ENCODE measurements at regions of chr14 and their contacts with region 1.

Region 1: GRCh38 chr14:20682435-20683124 is 1.8 kb upstream of the RNASE4 start:
- DNase-seq: peak; percentile 89 to 95 (median 93)
- ATAC-seq: peak; percentile 91 to 94 (median 92)
- H3K4me3 ChIP-seq: peak overlapping the region; percentile 47 to 95 (median 75)
- H3K27ac ChIP-seq: peak overlapping the region; percentile 96 to 100 (median 100)
- H3K4me1 ChIP-seq: peaks cover 0 to 37% (median 19%) of the 10 kb centered on the region in 12 donors
- H3K27me3 ChIP-seq: no peaks in the 10 kb centered on the region
- CTCF ChIP-seq: peak in 3 of 12 donors; percentile 0 to 39 (median 30)
- POLR2A ChIP-seq: peak; percentile 8 to 91

Region 2: DNA sequence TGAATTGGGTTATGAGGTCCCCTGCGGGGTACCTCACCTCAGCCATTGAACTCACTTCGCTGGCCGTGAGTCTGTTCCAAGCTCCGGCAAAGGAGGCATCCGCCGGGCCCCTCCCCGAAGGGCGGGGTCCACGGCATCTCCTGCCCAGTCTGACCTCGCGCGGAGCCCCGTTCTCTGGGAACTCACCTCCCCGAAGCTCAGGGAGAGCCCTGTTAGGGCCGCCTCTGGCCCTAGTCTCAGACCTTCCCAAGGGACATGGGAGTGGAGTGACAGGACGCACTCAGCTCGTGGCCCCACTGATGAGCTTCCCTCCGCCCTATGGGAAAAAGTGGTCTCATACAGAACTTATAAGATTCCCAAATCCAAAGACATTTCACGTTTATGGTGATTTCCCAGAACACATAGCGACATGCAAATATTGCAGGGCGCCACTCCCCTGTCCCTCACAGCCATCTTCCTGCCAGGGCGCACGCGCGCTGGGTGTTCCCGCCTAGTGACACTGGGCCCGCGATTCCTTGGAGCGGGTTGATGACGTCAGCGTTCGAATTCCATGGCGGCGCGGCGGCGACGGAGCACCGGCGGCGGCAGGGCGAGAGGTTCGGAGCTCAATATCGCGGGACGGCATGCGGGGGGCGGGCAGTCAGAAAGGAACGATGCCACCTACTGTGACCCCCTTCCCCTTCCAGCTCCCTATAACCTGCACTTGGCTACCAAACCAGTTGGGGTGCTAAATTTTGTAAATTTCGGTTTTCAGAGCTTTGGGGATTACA is 339.3 kb before region 1 on chr14 and contains the start of gene PARP2:
- intact Hi-C with region 1: loop called in 3 of 10 experiments (anchors 1 to 5 kb)
- DNase-seq: peak; percentile 97 to 99 (median 98)
- ATAC-seq: peak; percentile 98 to 99 (median 98)
- H3K4me3 ChIP-seq: peak within 1 kb of the TSS; percentile 52 to 88 (median 70)
- H3K27ac ChIP-seq: peak within 1 kb of the TSS; percentile 73 to 98 (median 85)
- H3K4me1 ChIP-seq: peaks cover 0 to 13% (median 6%) of the 10 kb centered on the region in 12 donors
- H3K27me3 ChIP-seq: no peaks in the 10 kb centered on the region
- CTCF ChIP-seq: peak in 1 of 12 donors; percentile 11
- POLR2A ChIP-seq: peak in 1 of 2 donors; percentile 85
- total RNA-seq, gene PARP2: 6.8 to 20.0 (median 16.2) TPM

Region 3: GRCh38 chr14:20461274-20462001 is 221.1 kb before region 1 on chr14 and contains the start of gene PIP4P1:
- intact Hi-C with region 1: loop called in 6 of 10 experiments (anchors 2 to 10 kb)
- DNase-seq: peak; percentile 98 to 100 (median 99)
- ATAC-seq: peak; percentile 97 to 99 (median 98)
- H3K4me3 ChIP-seq: peak within 1 kb of the TSS; percentile 66 to 99 (median 92)
- H3K27ac ChIP-seq: peak within 1 kb of the TSS; percentile 57 to 97 (median 92)
- H3K4me1 ChIP-seq: peaks cover 0 to 52% (median 17%) of the 10 kb centered on the region in 12 donors
- H3K27me3 ChIP-seq: no peaks in the 10 kb centered on the region
- CTCF ChIP-seq: no peak
- POLR2A ChIP-seq: peak in 1 of 2 donors; percentile 88
- total RNA-seq, gene PIP4P1: 12.3 to 25.3 (median 18.0) TPM

Region 4: GRCh38 chr14:20624495-20625070 is 58.0 kb before region 1 on chr14:
- intact Hi-C with region 1: loop called in 4 of 10 experiments (anchors 5 kb)
- DNase-seq: peak; percentile 25 to 77 (median 52)
- ATAC-seq: peak; percentile 27 to 62 (median 53)
- H3K4me3 ChIP-seq: peak overlapping the region in 10 of 12 donors; percentile 9 to 47 (median 26)
- H3K27ac ChIP-seq: peak overlapping the region in 2 of 12 donors; percentile 1 to 12
- H3K4me1 ChIP-seq: peaks cover 0 to 41% (median 10%) of the 10 kb centered on the region in 12 donors
- H3K27me3 ChIP-seq: peaks cover 0 to 44% (median 0%) of the 10 kb centered on the region in 9 donors
- CTCF ChIP-seq: no peak
- POLR2A ChIP-seq: no peak

Region 5: DNA sequence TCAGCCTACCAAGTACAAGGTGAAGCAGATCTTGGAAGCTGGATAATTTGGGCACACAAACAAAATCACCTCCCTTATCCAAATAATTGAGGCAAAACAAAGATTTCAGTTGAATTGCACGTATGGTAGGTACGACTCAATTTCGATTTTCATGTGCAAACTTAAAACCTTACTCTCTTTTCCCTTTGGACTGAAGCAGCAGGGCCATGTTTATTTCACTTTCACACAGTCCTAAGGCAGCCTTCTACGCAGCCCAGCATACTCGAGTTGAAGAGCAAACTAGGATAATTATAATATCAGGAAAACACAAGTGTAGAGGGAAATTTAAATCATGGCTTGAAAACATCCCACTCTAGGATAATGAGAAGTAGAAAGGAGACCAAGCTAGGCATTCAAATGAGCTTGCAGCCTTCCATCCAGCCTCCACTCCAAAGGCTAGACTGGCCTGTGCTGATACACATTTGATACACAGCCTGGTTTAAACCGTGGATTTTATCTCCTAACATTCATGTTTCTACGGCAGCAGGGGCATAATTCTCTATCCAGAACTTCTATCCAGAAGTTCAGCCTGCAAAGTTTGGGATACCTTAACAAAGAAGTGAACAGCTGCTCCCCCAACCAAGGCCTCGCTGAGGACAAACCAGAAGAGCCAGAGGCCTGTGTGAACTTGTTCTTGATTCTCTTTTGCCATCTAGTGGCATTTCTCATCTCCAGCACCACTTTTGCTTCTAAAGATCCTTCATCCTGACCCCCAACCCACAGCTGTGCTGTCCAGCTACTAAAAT is 357.2 kb after region 1 on chr14:
- intact Hi-C with region 1: loop called in 1 of 10 experiments (anchors 5 kb)
- DNase-seq: peak in 4 of 5 donors; percentile 45 to 61 (median 55)
- ATAC-seq: peak; percentile 53 to 75 (median 66)
- H3K4me3 ChIP-seq: peak overlapping the region in 5 of 12 donors; percentile 6 to 43 (median 9)
- H3K27ac ChIP-seq: peak overlapping the region; percentile 19 to 91 (median 74)
- H3K4me1 ChIP-seq: peaks cover 5 to 59% (median 36%) of the 10 kb centered on the region in 12 donors
- H3K27me3 ChIP-seq: no peaks in the 10 kb centered on the region
- CTCF ChIP-seq: peak; percentile 55 to 82 (median 71)
- POLR2A ChIP-seq: no peak

Region 6: DNA sequence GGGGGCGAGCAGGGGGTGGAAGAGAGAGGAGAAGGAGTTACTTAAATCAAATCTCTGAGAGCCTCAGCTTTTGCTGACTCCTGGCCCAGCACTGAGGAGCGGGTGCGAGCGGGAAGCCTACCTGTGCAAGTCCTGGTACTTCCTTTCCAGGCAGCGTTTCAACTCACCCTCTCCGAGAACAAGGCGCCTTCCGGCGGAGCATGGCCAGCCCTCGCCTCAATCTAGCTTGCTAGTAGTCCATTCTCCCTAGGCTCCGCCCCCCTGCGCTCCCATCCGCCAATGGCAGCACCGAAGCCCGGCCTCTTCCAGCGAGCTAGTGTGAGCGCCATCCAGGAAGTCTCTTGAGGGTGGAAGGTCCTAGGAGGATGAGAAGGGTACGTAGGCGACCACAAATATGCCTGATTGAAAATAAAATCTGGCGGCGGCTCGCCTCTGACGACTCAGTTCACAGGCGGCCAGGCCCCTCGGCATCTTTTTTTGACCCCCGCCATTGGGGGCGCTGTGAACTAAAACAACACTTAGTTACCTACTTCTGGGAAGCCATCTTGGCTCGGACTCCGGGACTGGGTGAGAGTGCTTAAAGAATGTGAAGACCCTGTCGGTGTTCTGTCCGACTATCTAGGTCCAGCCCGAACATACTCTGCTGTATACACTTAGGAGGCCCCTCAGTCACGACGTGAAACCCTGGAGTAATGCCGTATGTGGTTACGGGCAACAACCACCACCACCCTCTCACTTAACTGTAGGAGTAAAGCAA is 773.5 kb after region 1 on chr14 and contains the start of gene CHD8:
- intact Hi-C with region 1: loop called in 1 of 10 experiments (anchors 5 kb)
- DNase-seq: peak; percentile 99 to 100 (median 100)
- ATAC-seq: peak; percentile 100
- H3K4me3 ChIP-seq: peak within 1 kb of the TSS; percentile 64 to 97 (median 85)
- H3K27ac ChIP-seq: peak within 1 kb of the TSS; percentile 91 to 99 (median 95)
- H3K4me1 ChIP-seq: peaks cover 0 to 33% (median 15%) of the 10 kb centered on the region in 12 donors
- H3K27me3 ChIP-seq: no peaks in the 10 kb centered on the region
- CTCF ChIP-seq: peak; percentile 44 to 81 (median 70)
- POLR2A ChIP-seq: peak in 1 of 2 donors; percentile 46
- total RNA-seq, gene CHD8: 24.7 to 56.9 (median 42.3) TPM

Measured in heart left ventricle (tissue), 16 donors.